Activated naive CD4-positive, alpha-beta T cell treated with anti-CD3 and anti-CD28 coated beads for 36 hours (primary cell): ENCODE measurements at regions of chr4 and their contacts with region 1.

Region 1: GRCh38 chr4:48103483-48104139 is 30.4 kb downstream of the TXK start:
- DNase-seq: peak; percentile 64
- H3K4me3 Mint-ChIP-seq: no peak overlapping the region
- H3K27ac Mint-ChIP-seq: peak overlapping the region; percentile 93
- H3K4me1 Mint-ChIP-seq: peaks cover 46% of the 10 kb centered on the region
- H3K27me3 Mint-ChIP-seq: no peaks in the 10 kb centered on the region

Region 2: GRCh38 chr4:48016141-48017103 is 87.2 kb before region 1 on chr4 and contains the starts of genes CNGA1 and NIPAL1:
- CTCF ChIA-PET with region 1: interaction called, 3 read pairs
- intact Hi-C with region 1: loop called (anchors 1 kb)
- DNase-seq: peak; percentile 72
- H3K4me3 Mint-ChIP-seq: peak within 1 kb of the TSS; percentile 81
- H3K27ac Mint-ChIP-seq: peak within 1 kb of the TSS; percentile 46
- H3K4me1 Mint-ChIP-seq: peaks cover 26% of the 10 kb centered on the region
- H3K27me3 Mint-ChIP-seq: peaks cover 5% of the 10 kb centered on the region
- total RNA-seq, gene CNGA1: 0.26 to 0.94 TPM
- total RNA-seq, gene NIPAL1: 1.0 to 2.0 TPM

Region 3: GRCh38 chr4:48047421-48047844 is 56.2 kb before region 1 on chr4:
- CTCF ChIA-PET with region 1: interaction called, 3 read pairs
- intact Hi-C with region 1: loop called (anchors 1 kb)
- DNase-seq: peak; percentile 91
- H3K4me3 Mint-ChIP-seq: peak overlapping the region; percentile 1
- H3K27ac Mint-ChIP-seq: no peak overlapping the region
- H3K4me1 Mint-ChIP-seq: peaks cover 58% of the 10 kb centered on the region
- H3K27me3 Mint-ChIP-seq: no peaks in the 10 kb centered on the region

Region 4: DNA sequence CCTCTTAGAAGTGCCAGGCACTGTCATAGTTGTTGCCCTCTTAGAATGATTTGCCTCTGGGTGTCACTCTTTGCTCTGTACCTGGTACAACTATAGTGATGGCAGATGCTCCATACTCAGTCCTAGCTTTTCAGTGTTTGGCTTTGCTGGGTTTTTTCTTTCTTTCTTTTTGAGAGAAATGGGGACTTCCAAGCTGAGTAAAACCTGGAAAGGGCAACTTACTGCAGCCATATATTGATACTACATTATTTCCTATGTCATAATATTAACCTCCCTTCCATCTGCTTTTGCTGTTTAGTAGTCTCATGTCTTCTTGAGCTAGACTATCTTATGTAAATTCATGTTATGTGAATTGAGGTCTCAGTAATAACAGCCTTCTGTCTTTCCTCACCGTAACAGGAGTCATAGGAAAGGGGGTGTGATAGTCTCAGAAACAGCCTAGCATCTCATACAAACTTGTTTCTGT is 38.0 kb before region 1 on chr4:
- CTCF ChIA-PET with region 1: interaction called, 8 read pairs
- intact Hi-C with region 1: loop called (anchors 1 kb)
- DNase-seq: peak; percentile 48
- H3K4me3 Mint-ChIP-seq: no peak overlapping the region
- H3K27ac Mint-ChIP-seq: peak overlapping the region; percentile 44
- H3K4me1 Mint-ChIP-seq: peaks cover 36% of the 10 kb centered on the region
- H3K27me3 Mint-ChIP-seq: no peaks in the 10 kb centered on the region

Region 5: DNA sequence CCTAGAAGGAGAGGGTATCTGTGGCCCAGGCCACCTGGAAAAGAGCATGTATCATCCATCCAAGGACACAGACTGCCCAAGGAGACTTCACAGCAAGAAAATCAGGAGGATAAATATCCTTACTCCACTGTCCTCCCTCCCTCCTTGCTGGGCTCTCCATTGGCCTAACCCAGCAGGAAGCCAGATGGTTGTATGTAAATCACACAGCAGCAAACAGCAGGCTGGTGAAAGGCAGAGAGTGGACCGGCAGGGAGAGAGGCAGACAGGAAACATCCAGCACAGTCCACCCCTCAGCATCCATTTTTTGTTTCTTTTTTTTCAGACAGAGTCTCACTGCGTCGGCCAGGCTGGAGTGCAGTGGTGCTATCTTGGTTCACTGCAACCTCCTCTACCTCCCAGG is 13.0 kb after region 1 on chr4:
- CTCF ChIA-PET with region 1: interaction called, 19 read pairs
- intact Hi-C with region 1: loop called (anchors 1 kb)
- DNase-seq: no peak
- H3K4me3 Mint-ChIP-seq: no peak overlapping the region
- H3K27ac Mint-ChIP-seq: peak overlapping the region; percentile 14
- H3K4me1 Mint-ChIP-seq: peaks cover 72% of the 10 kb centered on the region
- H3K27me3 Mint-ChIP-seq: no peaks in the 10 kb centered on the region

Region 6: DNA sequence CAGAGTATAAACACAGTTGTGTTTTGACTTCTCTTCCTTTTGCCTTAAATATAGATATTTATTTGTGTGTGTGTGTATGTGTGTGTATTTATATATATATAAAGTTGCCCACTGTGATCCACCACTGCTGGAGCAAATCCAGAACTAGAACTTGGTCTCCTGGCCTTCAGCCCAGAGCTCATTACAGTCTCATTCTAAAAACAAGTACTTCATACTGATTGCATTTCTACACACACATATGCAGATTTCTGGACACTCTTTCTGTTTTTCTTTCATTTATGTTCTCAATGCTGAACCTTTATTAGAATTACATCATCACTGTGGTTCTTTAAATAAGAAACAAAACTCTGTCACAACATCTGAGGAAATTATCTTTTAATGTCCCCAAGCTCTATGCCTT is 30.1 kb after region 1 on chr4:
- CTCF ChIA-PET with region 1: interaction called, 33 read pairs
- intact Hi-C with region 1: loop called (anchors 1 kb)
- DNase-seq: no peak
- H3K4me3 Mint-ChIP-seq: peak overlapping the region; percentile 79
- H3K27ac Mint-ChIP-seq: peak overlapping the region; percentile 99
- H3K4me1 Mint-ChIP-seq: peaks cover 69% of the 10 kb centered on the region
- H3K27me3 Mint-ChIP-seq: no peaks in the 10 kb centered on the region

Region 7: DNA sequence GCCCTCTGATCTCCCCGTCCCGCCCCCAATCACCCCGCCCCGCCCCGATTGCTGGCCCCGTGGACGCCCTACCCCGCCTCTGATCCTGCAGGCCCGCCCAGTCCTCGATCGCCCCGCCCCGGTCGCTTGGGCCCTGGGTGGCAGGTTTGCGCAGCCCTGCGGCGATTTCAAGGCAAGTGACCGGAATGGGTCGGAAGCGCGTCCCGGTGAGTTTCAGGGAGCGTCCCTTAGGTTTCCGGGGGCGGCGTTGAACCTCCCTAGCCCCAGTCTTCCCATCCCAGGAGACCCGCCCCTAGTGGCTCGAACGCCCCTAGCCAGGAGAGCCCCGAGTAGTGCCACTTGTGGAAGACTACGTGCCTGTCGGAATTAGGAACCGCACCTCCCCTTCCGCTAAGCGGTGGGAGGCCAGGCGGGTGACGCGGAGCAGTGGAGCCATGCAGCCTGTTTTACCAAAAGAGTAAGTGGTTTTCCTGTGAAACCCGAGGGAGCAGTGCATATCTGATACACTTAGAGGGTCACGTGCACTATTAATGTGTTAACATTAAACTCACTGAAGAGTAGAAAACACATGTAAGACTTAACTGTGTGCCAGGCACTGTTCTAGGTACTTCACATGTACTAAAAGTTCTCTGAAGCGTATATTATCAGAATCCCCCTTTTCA is 166.4 kb after region 1 on chr4:
- CTCF ChIA-PET with region 1: no interaction called
- intact Hi-C with region 1: no loop called
- DNase-seq: peak; percentile 93
- H3K4me3 Mint-ChIP-seq: peak overlapping the region; percentile 93
- H3K27ac Mint-ChIP-seq: peak overlapping the region; percentile 83
- H3K4me1 Mint-ChIP-seq: peaks cover 9% of the 10 kb centered on the region
- H3K27me3 Mint-ChIP-seq: no peaks in the 10 kb centered on the region

Region 8: GRCh38 chr4:48429709-48430474 is 326.3 kb after region 1 on chr4:
- CTCF ChIA-PET with region 1: no interaction called
- intact Hi-C with region 1: loop called (anchors 1 kb)
- DNase-seq: peak; percentile 16
- H3K4me3 Mint-ChIP-seq: no peak overlapping the region
- H3K27ac Mint-ChIP-seq: no peak overlapping the region
- H3K4me1 Mint-ChIP-seq: peaks cover 49% of the 10 kb centered on the region
- H3K27me3 Mint-ChIP-seq: no peaks in the 10 kb centered on the region